ENCODE measurements at regions of chr2 and their contacts with region 1.

Region 1: GRCh38 chr2:223459328-223459939 is 142.7 kb downstream of the SCG2 start:
- DNase-seq: peak; percentile 62
- ATAC-seq: no peak
- H3K4me3 ChIP-seq: no peak overlapping the region
- H3K27ac ChIP-seq: no peak overlapping the region
- H3K4me1 ChIP-seq: peaks cover 27% of the 10 kb centered on the region
- H3K27me3 ChIP-seq: no peaks in the 10 kb centered on the region
- CTCF ChIP-seq: peak; percentile 66

Region 2: DNA sequence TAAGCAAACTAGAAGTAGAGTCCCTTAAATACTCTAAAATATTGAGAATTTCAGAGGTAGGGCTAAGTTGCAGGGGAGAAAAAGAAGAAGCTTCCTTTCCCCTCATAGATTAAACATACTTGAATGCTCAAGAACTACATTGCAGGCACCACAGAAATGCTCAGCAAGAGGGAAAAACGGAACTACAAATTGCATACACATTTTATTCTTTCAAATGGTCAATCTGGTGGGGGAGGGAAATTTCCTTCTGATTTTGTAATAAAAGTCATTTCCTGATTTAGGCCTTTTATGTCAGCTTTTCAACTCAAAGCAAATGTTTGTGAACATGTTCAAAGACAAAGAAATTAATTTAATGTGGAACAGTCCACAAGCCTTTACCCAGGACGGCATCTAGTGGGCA is 836.5 kb before region 1 on chr2:
- CTCF ChIA-PET with region 1: no interaction called
- POLR2A ChIA-PET with region 1: no interaction called
- intact Hi-C with region 1: no loop called
- DNase-seq: no peak
- ATAC-seq: no peak
- H3K4me3 ChIP-seq: no peak overlapping the region
- H3K27ac ChIP-seq: no peak overlapping the region
- H3K4me1 ChIP-seq: no peaks in the 10 kb centered on the region
- H3K27me3 ChIP-seq: no peaks in the 10 kb centered on the region
- CTCF ChIP-seq: no peak

Region 3: DNA sequence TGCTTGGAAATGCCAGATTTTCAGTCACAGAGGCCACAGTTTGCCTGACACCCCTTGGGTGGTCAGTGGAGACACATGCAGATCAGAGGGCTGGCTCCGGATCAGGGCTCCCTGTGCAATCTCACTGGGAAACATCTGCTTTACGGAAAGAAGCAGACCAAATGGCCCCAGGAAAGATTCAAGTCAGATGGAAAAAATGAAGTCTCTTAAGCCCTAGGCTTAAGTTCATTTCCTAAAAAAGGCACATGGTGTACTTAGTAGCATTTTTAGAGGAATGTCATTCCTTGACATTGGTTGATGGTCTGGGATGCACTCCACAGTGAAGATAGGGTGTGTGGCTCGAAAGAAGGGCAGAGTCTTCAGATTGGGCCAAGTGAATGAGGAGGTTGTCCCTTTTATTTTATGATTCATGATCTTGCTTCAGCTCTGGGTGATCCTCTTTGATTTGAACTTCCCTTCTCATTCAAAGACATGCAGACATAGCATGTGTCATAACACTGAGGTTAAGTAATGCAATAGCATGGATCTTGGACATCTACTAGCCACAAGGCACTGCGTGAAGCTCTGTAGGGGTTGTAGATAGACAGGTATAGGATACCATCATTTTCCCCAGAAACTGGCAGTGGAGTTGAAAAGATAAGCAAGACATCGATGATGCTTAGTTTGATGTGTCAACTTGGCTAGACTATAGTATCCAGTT is 350.9 kb before region 1 on chr2:
- CTCF ChIA-PET with region 1: interaction called, 12 read pairs
- POLR2A ChIA-PET with region 1: no interaction called
- intact Hi-C with region 1: no loop called
- DNase-seq: no peak
- ATAC-seq: no peak
- H3K4me3 ChIP-seq: no peak overlapping the region
- H3K27ac ChIP-seq: no peak overlapping the region
- H3K4me1 ChIP-seq: no peaks in the 10 kb centered on the region
- H3K27me3 ChIP-seq: peaks cover 39% of the 10 kb centered on the region; the same call in 1 of the 2 replicates
- CTCF ChIP-seq: no peak

Region 4: DNA sequence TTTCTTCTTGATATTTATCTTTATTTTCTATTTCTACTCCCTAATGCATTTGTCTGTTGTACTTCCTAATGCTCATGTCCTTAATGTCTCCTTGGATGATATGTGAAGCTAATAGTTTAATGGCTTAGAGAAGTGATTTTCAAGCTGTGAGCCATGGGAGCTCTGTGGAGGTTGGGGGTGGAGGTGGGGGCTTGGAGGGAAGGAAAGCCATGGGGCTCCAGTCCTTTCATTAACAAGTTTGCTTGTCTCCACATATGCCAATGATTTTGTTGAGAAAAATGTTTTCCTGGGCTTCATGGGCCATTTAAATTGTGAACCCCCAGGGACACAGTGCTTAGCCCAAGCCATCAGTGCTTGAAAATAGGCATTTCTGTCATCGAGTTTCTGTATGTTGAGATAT is 121.4 kb before region 1 on chr2:
- CTCF ChIA-PET with region 1: no interaction called
- POLR2A ChIA-PET with region 1: no interaction called
- intact Hi-C with region 1: no loop called
- DNase-seq: no peak
- ATAC-seq: no peak
- H3K4me3 ChIP-seq: no peak overlapping the region
- H3K27ac ChIP-seq: no peak overlapping the region
- H3K4me1 ChIP-seq: no peaks in the 10 kb centered on the region
- H3K27me3 ChIP-seq: peaks cover 29% of the 10 kb centered on the region
- CTCF ChIP-seq: no peak

Region 5: GRCh38 chr2:223549215-223549614 is 89.8 kb after region 1 on chr2:
- CTCF ChIA-PET with region 1: no interaction called
- POLR2A ChIA-PET with region 1: no interaction called
- intact Hi-C with region 1: loop called (anchors 5 kb)
- DNase-seq: peak; percentile 98
- ATAC-seq: peak; percentile 80
- H3K4me3 ChIP-seq: peak overlapping the region; percentile 30; the same call in 1 of the 2 replicates
- H3K27ac ChIP-seq: peak overlapping the region; percentile 90
- H3K4me1 ChIP-seq: peaks cover 54% of the 10 kb centered on the region
- H3K27me3 ChIP-seq: no peaks in the 10 kb centered on the region
- CTCF ChIP-seq: no peak

Region 6: DNA sequence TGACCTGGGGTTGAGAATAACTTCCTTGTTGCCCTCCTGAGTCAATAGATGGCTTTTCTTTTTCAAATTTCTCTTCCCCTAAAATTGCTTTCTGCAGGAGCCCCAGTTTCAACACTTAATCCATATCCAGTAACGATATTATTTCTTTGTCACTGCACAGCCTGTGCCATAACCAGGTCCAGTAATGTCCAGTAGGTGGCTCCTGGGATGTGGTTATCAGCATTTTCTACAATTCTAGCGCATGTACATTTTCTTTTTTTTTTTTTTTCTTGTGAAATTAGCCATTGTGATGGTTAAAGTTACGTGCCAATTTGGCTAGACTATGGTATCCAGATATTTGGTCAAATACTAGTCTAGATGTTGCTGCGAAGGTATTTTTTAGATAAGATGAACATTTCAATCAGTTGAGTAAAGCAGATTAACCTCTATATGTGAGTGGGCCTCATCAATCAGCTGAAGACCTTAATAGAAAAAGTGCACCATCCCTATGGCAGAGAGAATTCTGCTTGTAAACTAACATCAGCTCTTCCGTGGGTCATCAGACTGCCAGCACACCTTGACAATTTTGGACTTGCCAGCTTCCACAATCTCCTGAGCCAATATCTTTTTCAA is 215.7 kb after region 1 on chr2:
- CTCF ChIA-PET with region 1: no interaction called
- POLR2A ChIA-PET with region 1: no interaction called
- intact Hi-C with region 1: loop called (anchors 1 kb)
- DNase-seq: peak; percentile 61
- ATAC-seq: peak; percentile 89
- H3K4me3 ChIP-seq: no peak overlapping the region
- H3K27ac ChIP-seq: no peak overlapping the region
- H3K4me1 ChIP-seq: 0 out of 2 replicates have a peak, but pooled peaks cover 3% of the 10 kb centered on the region
- H3K27me3 ChIP-seq: no peaks in the 10 kb centered on the region
- CTCF ChIP-seq: peak; percentile 85

Measured in PC-3 (cell line).